ENCODE measurements at regions of chr16 and their contacts with region 1.

Region 1: GRCh38 chr16:81632392-81633146 is 146.5 kb upstream of the PLCG2 start:
- DNase-seq: peak; percentile 86
- ATAC-seq: peak; percentile 87
- H3K4me3 Mint-ChIP-seq: peak overlapping the region; percentile 61
- H3K27ac Mint-ChIP-seq: peak overlapping the region; percentile 89
- H3K4me1 Mint-ChIP-seq: peaks cover 79% of the 10 kb centered on the region
- H3K27me3 Mint-ChIP-seq: no peaks in the 10 kb centered on the region

Region 2: GRCh38 chr16:81604960-81605383 is 27.6 kb before region 1 on chr16:
- CTCF ChIA-PET with region 1: no interaction called
- POLR2A ChIA-PET with region 1: no interaction called
- DNase-seq: no peak
- ATAC-seq: no peak
- H3K4me3 Mint-ChIP-seq: no peak overlapping the region
- H3K27ac Mint-ChIP-seq: no peak overlapping the region
- H3K4me1 Mint-ChIP-seq: no peaks in the 10 kb centered on the region
- H3K27me3 Mint-ChIP-seq: no peaks in the 10 kb centered on the region

Region 3: GRCh38 chr16:81696961-81697615 is 64.5 kb after region 1 on chr16:
- CTCF ChIA-PET with region 1: interaction called, 24 read pairs
- POLR2A ChIA-PET with region 1: no interaction called
- DNase-seq: peak; percentile 62
- ATAC-seq: peak; percentile 38
- H3K4me3 Mint-ChIP-seq: no peak overlapping the region
- H3K27ac Mint-ChIP-seq: peak overlapping the region; percentile 46
- H3K4me1 Mint-ChIP-seq: peaks cover 5% of the 10 kb centered on the region
- H3K27me3 Mint-ChIP-seq: no peaks in the 10 kb centered on the region

Measured in activated CD8-positive, alpha-beta T cell treated with anti-CD3 and anti-CD28 coated beads, Interleukin-2, amount 10 ng/mL, durations not matched to agents 7 days and 5 days (primary cell).